Naive thymus-derived CD8-positive, alpha-beta T cell (primary cell): ENCODE measurements at regions of chr16 and their contacts with region 1.

Region 1: GRCh38 chr16:80580109-80580832 is 39.5 kb downstream of the DYNLRB2 start:
- DNase-seq: peak in 9 of 10 donors; percentile 4 to 71 (median 48)
- ATAC-seq: peak; percentile 84 to 97
- H3K4me3 Mint-ChIP-seq: peak overlapping the region; percentile 1 to 84 (median 63)
- H3K27ac Mint-ChIP-seq: peak overlapping the region; percentile 78 to 96 (median 89)
- H3K4me1 Mint-ChIP-seq: peaks cover 15 to 39% (median 27%) of the 10 kb centered on the region in 4 donors
- H3K27me3 Mint-ChIP-seq: no peaks in the 10 kb centered on the region

Region 2: GRCh38 chr16:80564394-80564793 is 15.9 kb before region 1 on chr16:
- POLR2A ChIA-PET with region 1: interaction called, 11 read pairs
- DNase-seq: peak in 2 of 10 donors; percentile 39 to 43
- ATAC-seq: peak; percentile 60 to 83
- H3K4me3 Mint-ChIP-seq: peak overlapping the region; percentile 33 to 77 (median 60)
- H3K27ac Mint-ChIP-seq: peak overlapping the region; percentile 81 to 95 (median 86)
- H3K4me1 Mint-ChIP-seq: peaks cover 17 to 32% (median 26%) of the 10 kb centered on the region in 4 donors
- H3K27me3 Mint-ChIP-seq: no peaks in the 10 kb centered on the region

Region 3: DNA sequence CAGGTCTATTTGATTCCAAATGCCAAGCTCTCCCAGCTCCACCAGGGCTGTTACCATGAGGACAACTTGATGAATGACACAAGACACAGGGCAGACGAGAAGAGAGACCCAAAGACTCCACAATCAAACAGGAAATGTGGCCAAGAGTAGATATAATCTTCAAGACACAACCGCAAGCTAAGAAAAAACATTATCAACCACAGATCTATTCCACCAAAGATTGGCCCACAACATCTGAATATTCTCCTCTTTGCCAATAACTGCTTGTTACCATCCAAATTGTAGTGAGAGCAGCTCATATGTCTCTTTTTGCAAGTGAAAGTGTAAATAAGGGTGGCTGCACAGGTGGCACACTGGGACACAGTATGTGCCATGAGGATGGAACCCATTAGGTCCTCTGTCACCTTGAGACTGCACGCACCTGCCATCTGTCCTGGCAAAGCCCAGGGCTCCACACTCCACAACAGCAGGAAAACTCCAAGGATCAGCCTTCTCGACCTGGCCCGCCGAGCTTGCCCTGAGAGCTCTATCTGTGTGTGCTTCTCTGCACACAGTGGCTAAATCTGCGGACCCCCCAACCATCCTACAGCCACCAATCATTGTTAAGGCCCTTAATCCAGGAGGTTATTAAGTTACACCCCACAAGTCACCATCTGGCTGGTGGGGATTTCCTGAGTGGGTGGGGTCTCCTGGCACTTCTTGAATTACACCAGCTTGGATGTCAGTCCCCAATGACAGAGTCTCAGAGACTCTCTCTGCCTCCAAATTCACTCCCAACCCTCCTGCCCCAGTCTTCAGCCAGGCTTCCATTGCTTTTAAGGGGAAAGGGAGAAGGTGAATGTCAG is 11.0 kb after region 1 on chr16:
- POLR2A ChIA-PET with region 1: interaction called, 11 read pairs
- DNase-seq: peak in 6 of 10 donors; percentile 21 to 84 (median 58)
- ATAC-seq: peak; percentile 92
- H3K4me3 Mint-ChIP-seq: peak overlapping the region; percentile 15 to 75 (median 60)
- H3K27ac Mint-ChIP-seq: peak overlapping the region in 8 of 10 donors; percentile 4 to 84 (median 66)
- H3K4me1 Mint-ChIP-seq: peaks cover 24 to 26% (median 25%) of the 10 kb centered on the region in 4 donors
- H3K27me3 Mint-ChIP-seq: peaks cover 2 to 21% (median 9%) of the 10 kb centered on the region in 5 donors